HCT116 (cell line): ENCODE measurements at regions of chr16 and their contacts with region 1.

Region 1: DNA sequence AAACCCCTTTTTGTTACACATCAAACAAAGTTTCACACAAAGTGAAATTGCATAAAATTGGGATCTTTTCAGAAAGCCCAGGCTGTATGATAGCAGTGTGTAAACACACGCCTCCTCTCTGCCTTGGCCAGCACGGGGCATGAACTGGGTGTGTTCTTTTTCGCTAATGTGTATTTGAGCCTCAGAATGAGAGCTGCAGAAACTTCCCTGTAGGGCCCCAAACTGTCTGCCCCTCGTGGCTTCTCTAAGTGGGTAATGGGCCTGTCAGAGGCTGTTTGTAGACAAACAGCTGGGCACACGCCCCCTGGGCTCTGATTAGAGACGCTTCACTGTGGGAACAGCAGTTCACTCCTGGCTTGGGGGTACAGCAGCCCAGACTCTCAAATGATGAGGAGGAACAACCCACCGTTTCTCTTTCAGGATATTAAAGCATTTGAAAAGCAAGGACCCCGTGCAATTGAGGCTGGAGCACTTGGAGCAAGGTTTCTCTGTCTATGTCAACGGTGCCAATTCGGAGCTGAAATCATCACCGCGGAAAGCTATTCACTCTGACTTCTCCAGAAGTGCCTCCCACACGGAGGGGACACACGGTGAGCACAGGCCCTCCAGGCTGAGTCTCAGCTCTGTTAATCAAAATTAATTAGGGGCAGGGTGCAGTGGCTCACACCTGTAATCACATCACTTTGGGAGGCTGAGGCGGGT is 78.4 kb downstream of the KATNIP start:
- DNase-seq: no peak
- ATAC-seq: no peak
- H3K4me3 ChIP-seq: no peak overlapping the region
- H3K27ac ChIP-seq: no peak overlapping the region
- H3K4me1 ChIP-seq: no peaks in the 10 kb centered on the region
- H3K27me3 ChIP-seq: no peaks in the 10 kb centered on the region
- CTCF ChIP-seq: no peak
- POLR2A ChIP-seq: no peak
- RAD21 ChIP-seq: no peak

Region 2: DNA sequence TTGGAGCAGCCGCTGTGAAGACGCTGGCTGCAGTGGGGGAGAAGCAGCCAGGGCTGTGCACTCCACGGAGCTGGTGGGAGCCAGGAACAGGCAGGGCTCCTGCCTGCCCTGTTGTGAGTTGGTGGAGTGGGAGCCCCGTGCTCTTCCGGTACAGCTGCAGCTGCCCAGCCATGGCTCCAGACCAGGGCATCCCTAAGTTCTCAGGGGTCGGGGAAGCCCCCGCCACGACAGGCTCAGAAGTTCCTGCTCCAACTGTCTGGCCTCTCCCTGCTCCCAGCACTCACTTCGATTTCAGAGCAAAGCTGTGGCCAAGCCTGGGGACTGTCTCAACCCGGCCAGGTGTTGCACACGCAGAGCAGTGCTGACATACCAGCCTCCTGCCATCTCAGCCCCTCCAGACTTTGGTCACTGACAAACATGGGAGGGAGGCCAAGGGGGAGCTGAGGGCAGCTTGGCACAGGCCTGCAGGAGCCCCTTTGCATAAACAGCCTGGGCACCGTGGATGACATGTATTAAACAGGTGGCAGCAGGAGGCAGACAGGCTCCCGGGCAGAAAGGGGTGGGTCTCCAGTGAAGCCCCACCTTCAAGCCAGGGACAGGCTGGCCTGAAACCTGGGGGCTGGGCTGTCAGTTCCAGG is 438.9 kb before region 1 on chr16:
- CTCF ChIA-PET with region 1: no interaction called
- POLR2A ChIA-PET with region 1: no interaction called
- RAD21 ChIA-PET with region 1: no interaction called
- intact Hi-C with region 1: no loop called
- DNase-seq: no peak
- ATAC-seq: peak; percentile 82
- H3K4me3 ChIP-seq: no peak overlapping the region
- H3K27ac ChIP-seq: no peak overlapping the region
- H3K4me1 ChIP-seq: no peaks in the 10 kb centered on the region; a peak in 1 of 4 replicates
- H3K27me3 ChIP-seq: no peaks in the 10 kb centered on the region; the same call in 1 of the 2 replicates
- CTCF ChIP-seq: no peak
- POLR2A ChIP-seq: no peak
- RAD21 ChIP-seq: no peak

Region 3: GRCh38 chr16:27639561-27640276 is 11.3 kb after region 1 on chr16:
- CTCF ChIA-PET with region 1: interaction called, 10 read pairs
- POLR2A ChIA-PET with region 1: no interaction called
- RAD21 ChIA-PET with region 1: no interaction called
- intact Hi-C with region 1: no loop called
- DNase-seq: peak; percentile 21
- ATAC-seq: peak; percentile 90
- H3K4me3 ChIP-seq: no peak overlapping the region
- H3K27ac ChIP-seq: no peak overlapping the region
- H3K4me1 ChIP-seq: peaks cover 0 to 6% of the 10 kb centered on the region in 2 experiments; a peak in 1 of 4 replicates
- H3K27me3 ChIP-seq: no peaks in the 10 kb centered on the region
- CTCF ChIP-seq: peak; percentile 47 to 84 (median 75); a peak in 5 of 6 replicates
- POLR2A ChIP-seq: no peak
- RAD21 ChIP-seq: peak; percentile 67

Region 4: GRCh38 chr16:27671410-27671809 is 43.0 kb after region 1 on chr16:
- CTCF ChIA-PET with region 1: no interaction called
- POLR2A ChIA-PET with region 1: no interaction called
- RAD21 ChIA-PET with region 1: no interaction called
- intact Hi-C with region 1: no loop called
- DNase-seq: no peak
- ATAC-seq: peak; percentile 76
- H3K4me3 ChIP-seq: no peak overlapping the region
- H3K27ac ChIP-seq: no peak overlapping the region
- H3K4me1 ChIP-seq: no peaks in the 10 kb centered on the region
- H3K27me3 ChIP-seq: no peaks in the 10 kb centered on the region
- CTCF ChIP-seq: peak in 2 of 3 experiments; percentile 29 to 36; a peak in 2 of 6 replicates
- POLR2A ChIP-seq: no peak
- RAD21 ChIP-seq: no peak